ENCODE measurements at regions of chr12 and their contacts with region 1.

Region 1: GRCh38 chr12:93766796-93767523 is 89.8 kb downstream of the CRADD start:
- H3K4me3 ChIP-seq: no peak overlapping the region
- H3K27ac ChIP-seq: no peak overlapping the region
- H3K4me1 ChIP-seq: no peaks in the 10 kb centered on the region; the same call in 1 of the 2 replicates
- CTCF ChIP-seq: peak; percentile 29; the same call in 1 of the 2 replicates

Region 2: GRCh38 chr12:94074980-94075928 is 308.3 kb after region 1 on chr12:
- CTCF ChIA-PET with region 1: interaction called, 35 read pairs
- POLR2A ChIA-PET with region 1: no interaction called
- H3K4me3 ChIP-seq: no peak overlapping the region
- H3K27ac ChIP-seq: no peak overlapping the region
- H3K4me1 ChIP-seq: no peaks in the 10 kb centered on the region
- CTCF ChIP-seq: peak; percentile 33; the same call in 1 of the 2 replicates